ENCODE measurements at regions of chr14 and their contacts with region 1.

Region 1: DNA sequence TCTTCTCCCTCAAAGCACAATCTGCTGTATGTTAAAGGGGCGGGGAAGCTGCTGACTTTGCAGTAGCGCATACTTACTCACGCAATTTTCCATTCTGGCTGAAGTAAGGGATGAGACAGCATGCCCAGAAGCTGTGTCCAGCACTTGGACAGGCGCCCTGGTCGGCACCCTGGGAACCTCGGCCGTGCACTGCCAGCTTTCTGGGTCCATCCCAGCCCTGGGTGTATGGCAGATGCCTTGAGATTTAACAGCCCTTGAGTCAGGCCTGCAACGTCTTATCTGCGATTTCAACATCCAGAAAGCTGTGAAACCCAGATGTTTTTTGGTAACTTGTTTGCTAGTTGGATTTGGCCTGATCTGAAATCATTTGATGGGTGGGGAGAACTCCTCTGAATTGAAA is 16.1 kb downstream of the EML1 start:
- DNase-seq: no peak
- H3K4me3 ChIP-seq: no peak overlapping the region
- CTCF ChIP-seq: no peak

Region 2: GRCh38 chr14:99793213-99794150 is 15.9 kb before region 1 on chr14 and contains the start of gene EML1:
- CTCF ChIA-PET with region 1: interaction called, 11 read pairs
- POLR2A ChIA-PET with region 1: no interaction called
- DNase-seq: no peak
- H3K4me3 ChIP-seq: peak within 1 kb of the TSS; percentile 64
- CTCF ChIP-seq: peak; percentile 2

Region 3: GRCh38 chr14:99821519-99822508 is 12.5 kb after region 1 on chr14:
- CTCF ChIA-PET with region 1: interaction called, 13 read pairs
- POLR2A ChIA-PET with region 1: no interaction called
- DNase-seq: peak; percentile 84
- H3K4me3 ChIP-seq: no peak overlapping the region
- CTCF ChIP-seq: no peak

Region 4: DNA sequence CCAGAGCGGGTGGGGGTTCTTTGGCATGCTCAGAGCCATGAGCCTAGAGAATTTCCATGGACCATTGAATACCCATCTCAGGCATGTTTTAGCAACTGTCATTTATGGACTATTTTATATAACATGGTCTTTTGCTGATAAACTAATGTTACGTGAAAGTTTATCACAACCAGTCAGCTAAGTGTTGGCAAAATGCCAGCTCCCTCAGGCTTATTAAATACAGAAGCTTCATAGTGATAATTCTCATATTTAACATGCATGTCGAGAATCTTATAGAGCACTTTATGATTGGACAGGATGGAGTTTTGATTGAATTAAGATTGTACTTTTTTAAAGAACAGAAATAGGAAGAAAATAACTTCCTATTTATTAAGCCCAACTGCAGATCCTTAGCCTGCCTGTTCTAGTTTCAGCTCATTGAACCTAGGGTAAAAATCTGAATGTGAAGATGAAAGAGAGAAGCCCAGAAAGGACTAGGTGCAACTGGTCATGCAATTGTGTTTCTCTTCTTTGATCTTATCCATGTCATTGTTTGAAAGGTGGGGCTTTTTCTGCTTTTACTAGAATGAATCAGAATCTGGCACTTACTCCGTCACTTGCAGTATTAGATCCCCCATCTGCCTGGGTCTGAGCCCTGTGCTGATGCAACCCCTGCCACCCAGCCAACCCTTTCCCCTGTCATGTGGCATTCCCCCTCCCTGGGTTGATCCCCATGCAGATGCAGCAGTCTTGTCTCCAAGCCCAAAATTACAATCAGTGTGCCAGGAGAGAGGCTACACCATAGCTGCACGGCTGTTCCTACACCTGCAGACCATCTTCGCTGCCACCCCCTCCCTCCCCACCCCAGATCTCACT is 121.3 kb after region 1 on chr14:
- CTCF ChIA-PET with region 1: no interaction called
- POLR2A ChIA-PET with region 1: no interaction called
- DNase-seq: no peak
- H3K4me3 ChIP-seq: no peak overlapping the region
- CTCF ChIP-seq: no peak